ENCODE measurements at regions of chr15 and their contacts with region 1.

Region 1: GRCh38 chr15:94324117-94324826 is 92.9 kb downstream of the MCTP2 start:
- DNase-seq: peak in 1 of 2 experiments; percentile 19
- H3K4me3 ChIP-seq: no peak overlapping the region
- H3K27ac ChIP-seq: no peak overlapping the region
- H3K4me1 ChIP-seq: no peaks in the 10 kb centered on the region
- H3K27me3 ChIP-seq: no peaks in the 10 kb centered on the region
- CTCF ChIP-seq: peak; percentile 91

Region 2: GRCh38 chr15:94163999-94164807 is 160.1 kb before region 1 on chr15:
- CTCF ChIA-PET with region 1: interaction called, 5 read pairs
- POLR2A ChIA-PET with region 1: no interaction called
- intact Hi-C with region 1: loop called (anchors 1 kb)
- DNase-seq: peak in 1 of 2 experiments; percentile 29
- H3K4me3 ChIP-seq: no peak overlapping the region
- H3K27ac ChIP-seq: no peak overlapping the region
- H3K4me1 ChIP-seq: no peaks in the 10 kb centered on the region
- H3K27me3 ChIP-seq: no peaks in the 10 kb centered on the region
- CTCF ChIP-seq: peak; percentile 89

Measured in PC-9 (cell line).